H1 (cell line): ENCODE measurements at regions of chr1 and their contacts with region 1.

Region 1: DNA sequence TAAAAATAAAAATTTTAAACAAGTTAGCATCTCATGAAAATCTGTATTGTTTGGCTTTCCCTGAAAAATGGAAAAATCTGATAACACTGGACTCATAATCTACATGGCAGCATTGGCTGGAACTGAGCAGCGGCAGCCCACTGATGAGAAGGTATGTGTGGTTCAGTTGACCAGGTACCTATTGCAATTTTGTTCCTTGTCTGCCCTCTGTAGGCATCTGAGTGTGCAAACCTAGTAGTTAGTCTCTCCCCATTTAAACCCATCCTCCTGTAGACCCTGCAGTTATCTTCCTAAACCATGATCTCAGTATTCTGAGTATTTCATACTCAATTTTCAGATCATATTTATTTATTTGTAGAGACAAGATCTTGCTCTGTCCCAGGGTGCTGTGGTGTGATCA is 59.4 kb upstream of the SERBP1 start:
- DNase-seq: no peak
- H3K4me3 ChIP-seq: no peak overlapping the region
- H3K27ac ChIP-seq: no peak overlapping the region
- H3K4me1 ChIP-seq: peaks cover 0 to under 1% (median 0%) of the 10 kb centered on the region in 4 experiments; a peak in 2 of 7 replicates
- H3K27me3 ChIP-seq: no peaks in the 10 kb centered on the region
- CTCF ChIP-seq: peak in 2 of 3 experiments; percentile 60 to 64; a peak in 2 of 4 replicates
- EP300 ChIP-seq: no peak
- POLR2A ChIP-seq: no peak
- RAD21 ChIP-seq: peak; percentile 85 to 88

Region 2: DNA sequence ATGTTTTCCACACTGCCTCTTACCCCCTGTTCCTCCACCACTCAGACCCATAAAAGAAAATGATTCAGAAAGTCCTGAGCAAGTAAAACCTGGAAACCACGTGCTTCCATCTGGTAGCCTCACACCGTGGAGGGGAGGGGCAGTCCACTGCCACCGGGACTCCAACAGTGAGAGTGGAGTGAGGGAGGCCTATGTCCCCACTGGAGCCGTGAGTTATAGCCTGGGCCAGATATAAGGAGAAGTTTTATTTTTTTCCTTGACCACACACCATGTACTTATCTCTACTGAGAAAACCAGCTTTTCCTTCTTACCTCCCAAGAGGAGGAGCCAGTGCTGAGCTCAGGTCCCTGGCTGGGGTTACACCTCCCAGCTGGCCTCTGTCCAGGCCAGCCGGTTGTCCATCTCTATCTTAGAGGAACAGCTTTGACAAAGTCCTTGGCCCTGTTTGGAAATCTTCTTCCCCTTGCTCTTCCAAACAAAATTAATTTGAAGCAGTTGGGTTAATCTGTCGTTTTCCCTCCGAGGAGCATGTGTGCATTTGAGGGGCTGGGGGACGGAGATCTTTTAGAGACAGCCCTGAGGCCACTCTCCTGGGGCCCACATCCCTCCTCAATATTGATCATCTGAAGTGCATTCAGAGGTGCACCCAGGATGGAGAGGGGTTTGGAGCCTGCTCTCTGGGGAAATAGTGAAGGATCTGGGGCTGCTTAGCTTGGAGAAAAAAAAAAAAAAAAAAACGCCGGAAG is 10.3 kb before region 1 on chr1:
- CTCF ChIA-PET with region 1: interaction called, 23 read pairs
- POLR2A ChIA-PET with region 1: interaction called, 3 read pairs
- DNase-seq: no peak
- H3K4me3 ChIP-seq: no peak overlapping the region
- H3K27ac ChIP-seq: no peak overlapping the region
- H3K4me1 ChIP-seq: peaks cover 0 to 1% (median 0%) of the 10 kb centered on the region in 4 experiments; a peak in 1 of 7 replicates
- H3K27me3 ChIP-seq: no peaks in the 10 kb centered on the region
- CTCF ChIP-seq: no peak
- EP300 ChIP-seq: no peak
- POLR2A ChIP-seq: no peak
- RAD21 ChIP-seq: no peak

Region 3: GRCh38 chr1:67889953-67890567 is 400.4 kb after region 1 on chr1:
- CTCF ChIA-PET with region 1: no interaction called
- POLR2A ChIA-PET with region 1: no interaction called
- DNase-seq: no peak
- H3K4me3 ChIP-seq: no peak overlapping the region
- H3K27ac ChIP-seq: no peak overlapping the region
- H3K4me1 ChIP-seq: peaks cover 5 to 22% (median 15%) of the 10 kb centered on the region in 4 experiments
- H3K27me3 ChIP-seq: no peaks in the 10 kb centered on the region
- CTCF ChIP-seq: no peak
- EP300 ChIP-seq: no peak
- POLR2A ChIP-seq: no peak
- RAD21 ChIP-seq: no peak